IMR-90 (cell line): ENCODE measurements at regions of chr13 and their contacts with region 1.

Region 1: GRCh38 chr13:44710576-44710975 is 134.4 kb upstream of the TSC22D1 start:
- DNase-seq: peak; percentile 96
- ATAC-seq: peak; percentile 59
- H3K4me3 ChIP-seq: no peak overlapping the region
- H3K27ac ChIP-seq: peak overlapping the region; percentile 68
- H3K4me1 ChIP-seq: peaks cover 12% of the 10 kb centered on the region
- H3K27me3 ChIP-seq: no peaks in the 10 kb centered on the region
- CTCF ChIP-seq: no peak
- POLR2A ChIP-seq: no peak
- RAD21 ChIP-seq: peak; percentile 12; the same call in 1 of the 2 replicates

Region 2: DNA sequence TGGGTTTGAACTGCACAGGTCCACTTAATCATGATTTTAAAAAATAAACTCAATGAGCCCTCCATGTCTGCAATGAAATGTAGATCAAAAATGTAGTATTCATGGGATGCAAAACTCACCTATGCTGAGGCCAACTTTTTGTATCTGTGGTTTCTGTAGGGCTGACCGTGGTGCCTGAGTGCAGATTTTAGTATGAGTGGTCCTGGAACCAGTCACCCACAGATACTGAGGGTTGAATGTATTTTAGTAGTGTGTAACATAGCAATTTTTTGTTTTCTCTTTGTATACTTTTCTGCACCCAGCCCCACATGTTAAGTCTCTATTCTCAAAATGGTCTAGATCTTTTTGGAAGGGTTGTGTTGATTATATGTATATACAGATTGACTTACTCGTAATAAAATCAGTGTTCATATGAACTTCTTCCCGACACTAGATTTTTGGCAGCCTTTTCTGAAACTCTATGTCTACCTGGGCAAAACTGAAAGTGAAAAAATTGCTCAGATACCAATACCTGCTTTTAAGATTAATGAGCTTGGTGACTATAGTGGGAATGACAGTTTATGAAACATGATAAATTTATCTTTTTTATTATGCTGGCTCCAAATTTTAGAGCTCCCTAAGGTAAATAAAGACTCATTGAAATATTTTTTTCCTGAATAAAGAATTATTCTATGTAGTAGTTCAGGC is 1635.6 kb before region 1 on chr13:
- CTCF ChIA-PET with region 1: no interaction called
- POLR2A ChIA-PET with region 1: no interaction called
- dilution Hi-C with region 1: no loop called
- in situ Hi-C with region 1: no loop called
- intact Hi-C with region 1: no loop called
- DNase-seq: no peak
- ATAC-seq: no peak
- H3K4me3 ChIP-seq: no peak overlapping the region
- H3K27ac ChIP-seq: no peak overlapping the region
- H3K4me1 ChIP-seq: peaks cover 4% of the 10 kb centered on the region
- H3K27me3 ChIP-seq: no peaks in the 10 kb centered on the region
- CTCF ChIP-seq: no peak
- POLR2A ChIP-seq: no peak
- RAD21 ChIP-seq: no peak

Region 3: GRCh38 chr13:44692173-44692713 is 18.3 kb before region 1 on chr13:
- CTCF ChIA-PET with region 1: no interaction called
- POLR2A ChIA-PET with region 1: no interaction called
- dilution Hi-C with region 1: no loop called
- in situ Hi-C with region 1: no loop called
- intact Hi-C with region 1: no loop called
- DNase-seq: peak; percentile 43
- ATAC-seq: 0 out of 2 replicates have a peak, but pooled peaks have one; percentile 17
- H3K4me3 ChIP-seq: no peak overlapping the region
- H3K27ac ChIP-seq: no peak overlapping the region
- H3K4me1 ChIP-seq: no peaks in the 10 kb centered on the region
- H3K27me3 ChIP-seq: no peaks in the 10 kb centered on the region
- CTCF ChIP-seq: no peak
- POLR2A ChIP-seq: peak; percentile 84
- RAD21 ChIP-seq: no peak

Region 4: DNA sequence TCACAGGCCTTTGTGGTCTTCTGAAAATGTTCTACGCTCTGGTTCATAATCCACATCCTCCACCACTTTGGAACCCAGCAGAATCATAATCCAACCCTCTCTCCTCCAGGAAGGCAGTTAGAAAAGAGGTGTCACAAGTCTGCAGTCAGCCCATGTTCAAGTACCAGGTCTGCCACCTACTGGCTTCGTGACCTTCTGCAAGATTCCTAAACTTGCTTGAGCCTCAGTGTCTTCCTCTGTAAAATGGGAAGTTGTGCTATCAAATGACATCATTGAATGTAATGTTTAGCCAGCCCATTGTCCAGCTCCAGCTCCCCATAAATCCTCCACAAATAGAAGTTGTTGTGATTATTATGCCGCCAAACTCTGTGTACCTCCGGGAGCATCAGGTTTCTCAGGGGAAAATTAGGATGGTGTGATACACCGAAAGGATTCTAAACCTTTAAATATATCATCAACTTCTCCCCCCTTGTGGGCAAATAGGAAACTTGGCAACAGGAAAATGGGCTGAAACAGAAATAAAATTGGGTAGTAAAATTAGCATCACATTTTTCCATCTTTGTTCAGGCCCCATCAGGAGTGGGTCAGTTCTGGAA is 169.0 kb after region 1 on chr13:
- CTCF ChIA-PET with region 1: no interaction called
- POLR2A ChIA-PET with region 1: no interaction called
- dilution Hi-C with region 1: no loop called
- in situ Hi-C with region 1: no loop called
- intact Hi-C with region 1: loop called (anchors 10 kb)
- DNase-seq: peak; percentile 64
- ATAC-seq: peak; percentile 40; the same call in 1 of the 2 replicates
- H3K4me3 ChIP-seq: no peak overlapping the region
- H3K27ac ChIP-seq: no peak overlapping the region
- H3K4me1 ChIP-seq: peaks cover 5% of the 10 kb centered on the region
- H3K27me3 ChIP-seq: no peaks in the 10 kb centered on the region
- CTCF ChIP-seq: peak; percentile 53
- POLR2A ChIP-seq: no peak
- RAD21 ChIP-seq: peak; percentile 68

Region 5: DNA sequence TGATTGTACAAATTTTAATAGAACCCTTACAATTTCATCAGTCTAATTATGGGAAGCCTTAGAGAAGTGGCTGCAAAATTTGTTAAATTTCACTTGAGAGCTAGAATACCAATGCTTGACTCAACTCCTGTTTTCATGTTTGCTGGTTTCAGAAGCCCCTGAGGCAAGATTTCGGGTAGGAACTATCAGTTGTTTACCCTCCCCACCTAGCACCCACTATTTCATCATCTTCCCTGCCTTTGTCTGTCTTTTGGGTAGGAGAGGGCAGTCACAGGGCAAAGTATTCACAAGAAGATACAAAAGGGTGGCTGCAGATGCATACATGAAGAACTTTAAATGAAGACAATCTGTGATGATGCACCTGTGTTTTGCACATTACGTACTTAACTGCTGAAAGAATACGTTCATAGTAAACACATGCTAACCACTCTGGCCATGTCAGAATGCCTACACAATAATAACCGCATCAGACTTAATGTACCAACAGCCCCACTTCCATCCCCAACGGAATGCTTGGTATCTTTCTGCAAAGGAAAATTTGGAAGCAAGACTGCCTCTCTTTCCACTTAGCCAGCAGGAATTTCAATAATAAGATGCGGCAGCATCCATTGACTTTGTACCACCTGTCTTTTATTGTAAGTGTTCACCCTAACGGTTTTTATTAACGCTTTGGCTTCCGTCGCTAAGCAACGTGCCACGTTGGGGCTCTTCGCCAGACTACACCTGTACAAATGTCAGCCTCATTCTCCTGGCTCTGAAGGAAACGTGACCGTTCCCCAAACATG is 600.0 kb after region 1 on chr13:
- CTCF ChIA-PET with region 1: no interaction called
- POLR2A ChIA-PET with region 1: no interaction called
- dilution Hi-C with region 1: no loop called
- in situ Hi-C with region 1: no loop called
- intact Hi-C with region 1: loop called (anchors 5 kb)
- DNase-seq: no peak
- ATAC-seq: no peak
- H3K4me3 ChIP-seq: no peak overlapping the region
- H3K27ac ChIP-seq: no peak overlapping the region
- H3K4me1 ChIP-seq: no peaks in the 10 kb centered on the region; the same call in 1 of the 2 replicates
- H3K27me3 ChIP-seq: no peaks in the 10 kb centered on the region
- CTCF ChIP-seq: no peak
- POLR2A ChIP-seq: no peak
- RAD21 ChIP-seq: no peak